ENCODE measurements at regions of chr14 and their contacts with region 1.

Region 1: GRCh38 chr14:61475316-61475715 is 153.9 kb downstream of the PRKCH start:
- DNase-seq: peak; percentile 57

Region 2: DNA sequence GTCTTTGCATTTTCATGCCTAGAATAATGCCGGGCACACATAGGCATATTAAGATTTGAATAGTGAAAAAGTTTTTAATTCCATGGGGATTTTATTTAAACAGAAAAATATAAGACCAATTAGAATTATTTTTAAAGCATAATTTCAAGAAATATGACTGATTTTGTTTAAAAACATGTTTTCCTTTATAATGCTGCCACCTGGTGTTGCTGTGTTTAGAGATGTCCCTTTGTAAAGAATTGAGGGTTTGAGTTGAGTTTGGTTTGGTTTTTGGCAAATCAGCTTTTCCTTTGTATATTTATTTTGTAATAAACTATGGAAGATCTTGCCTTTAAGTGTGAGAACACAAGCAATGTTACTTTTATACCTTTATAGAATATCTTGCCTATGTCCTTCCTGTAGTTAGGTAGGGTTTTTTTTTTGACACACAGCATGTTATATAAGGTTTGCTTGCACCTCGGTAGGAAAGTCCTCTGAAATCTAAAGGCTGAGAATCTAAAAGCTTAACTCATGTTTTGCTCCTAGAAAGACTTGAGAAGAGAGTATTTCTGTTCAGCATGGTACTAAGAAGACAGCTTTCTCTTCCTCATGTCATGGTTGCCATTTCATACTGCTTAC is 255.5 kb after region 1 on chr14:
- in situ Hi-C with region 1: loop called (anchors 10 kb)
- DNase-seq: peak; percentile 27

Region 3: GRCh38 chr14:61780125-61780524 is 304.8 kb after region 1 on chr14:
- in situ Hi-C with region 1: no loop called
- DNase-seq: no peak

Measured in KBM-7 (cell line).